Activated CD4-positive, alpha-beta T cell treated with anti-CD3 and anti-CD28 coated beads for 36 hours (primary cell): ENCODE measurements at regions of chrX and their contacts with region 1.

Region 1: DNA sequence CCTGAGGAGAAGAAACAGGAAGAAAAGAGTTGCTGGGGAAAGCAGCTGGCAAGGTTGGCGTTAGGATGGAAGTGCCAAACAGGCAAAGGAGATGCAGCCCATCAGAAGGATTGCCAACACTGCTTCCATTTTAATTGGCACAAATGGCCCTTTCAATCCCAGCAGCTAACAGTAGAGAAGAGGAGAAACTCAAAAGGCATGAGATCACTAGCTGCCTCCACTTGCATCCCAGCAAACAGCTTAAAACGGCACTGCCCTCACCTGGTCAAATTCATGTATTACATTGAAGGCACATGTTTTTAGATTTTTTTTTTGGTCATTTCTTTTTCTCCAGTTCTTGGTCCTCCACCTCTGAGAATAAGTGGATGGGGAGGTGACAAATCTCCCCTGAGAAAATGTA is 14.9 kb upstream of the LOC101059915 start:
- DNase-seq: peak; percentile 73
- ATAC-seq: peak; percentile 68
- H3K4me3 Mint-ChIP-seq: no peak overlapping the region
- H3K27ac Mint-ChIP-seq: no peak overlapping the region
- H3K4me1 Mint-ChIP-seq: peaks cover 11% of the 10 kb centered on the region
- H3K27me3 Mint-ChIP-seq: no peaks in the 10 kb centered on the region

Region 2: DNA sequence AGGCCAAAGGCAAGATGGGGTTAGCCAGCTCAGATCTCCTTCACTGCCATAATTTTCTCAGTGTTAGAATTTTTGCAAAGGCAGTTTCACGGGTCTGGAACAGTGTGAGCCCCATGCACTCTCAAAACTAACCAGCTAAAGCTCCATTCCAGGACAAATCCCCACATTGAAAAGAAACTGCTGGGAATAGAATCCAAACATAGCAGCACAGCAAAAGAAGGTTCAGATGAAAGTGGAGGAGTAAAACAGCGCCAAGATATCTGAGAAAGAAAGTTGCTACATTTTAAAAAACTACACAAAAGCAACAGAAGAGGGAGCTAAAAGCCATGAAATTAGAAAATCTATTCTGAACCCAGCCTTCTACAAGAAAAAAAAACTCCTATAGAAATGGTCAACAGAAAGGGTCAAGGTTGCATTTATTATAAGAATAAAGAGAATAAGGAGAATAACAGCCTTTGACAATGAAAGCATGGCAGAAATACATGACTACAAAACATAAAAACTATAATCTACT is 681.9 kb before region 1 on chrX:
- CTCF ChIA-PET with region 1: no interaction called
- POLR2A ChIA-PET with region 1: no interaction called
- intact Hi-C with region 1: loop called in 1 of 2 experiments (anchors 2 kb)
- DNase-seq: no peak
- ATAC-seq: no peak
- H3K4me3 Mint-ChIP-seq: no peak overlapping the region
- H3K27ac Mint-ChIP-seq: no peak overlapping the region
- H3K4me1 Mint-ChIP-seq: peaks cover 3% of the 10 kb centered on the region
- H3K27me3 Mint-ChIP-seq: no peaks in the 10 kb centered on the region

Region 3: GRCh38 chrX:71579990-71580380 is 72.4 kb before region 1 on chrX:
- CTCF ChIA-PET with region 1: interaction called, 5 read pairs
- POLR2A ChIA-PET with region 1: interaction called, 5 read pairs
- intact Hi-C with region 1: loop called (anchors 2 to 5 kb)
- DNase-seq: no peak
- ATAC-seq: no peak
- H3K4me3 Mint-ChIP-seq: no peak overlapping the region
- H3K27ac Mint-ChIP-seq: no peak overlapping the region
- H3K4me1 Mint-ChIP-seq: peaks cover 2% of the 10 kb centered on the region
- H3K27me3 Mint-ChIP-seq: no peaks in the 10 kb centered on the region